CD8-positive, alpha-beta T cell (primary cell): ENCODE measurements at regions of chr19 and their contacts with region 1.

Region 1: GRCh38 chr19:4108767-4109625 is 14.9 kb downstream of the MAP2K2 start:
- DNase-seq: peak; percentile 59 to 96 (median 83)
- ATAC-seq: peak; percentile 55
- H3K4me3 ChIP-seq: peak overlapping the region in 1 of 2 experiments; percentile 22
- H3K4me3 Mint-ChIP-seq: peak overlapping the region; percentile 60
- H3K27ac ChIP-seq: peak overlapping the region; percentile 73 to 74
- H3K27ac Mint-ChIP-seq: peak overlapping the region; percentile 99
- H3K4me1 ChIP-seq: peaks cover 60% of the 10 kb centered on the region
- H3K4me1 Mint-ChIP-seq: peaks cover 68% of the 10 kb centered on the region
- H3K27me3 ChIP-seq: no peaks in the 10 kb centered on the region
- H3K27me3 Mint-ChIP-seq: no peaks in the 10 kb centered on the region
- CTCF ChIP-seq: no peak

Region 2: DNA sequence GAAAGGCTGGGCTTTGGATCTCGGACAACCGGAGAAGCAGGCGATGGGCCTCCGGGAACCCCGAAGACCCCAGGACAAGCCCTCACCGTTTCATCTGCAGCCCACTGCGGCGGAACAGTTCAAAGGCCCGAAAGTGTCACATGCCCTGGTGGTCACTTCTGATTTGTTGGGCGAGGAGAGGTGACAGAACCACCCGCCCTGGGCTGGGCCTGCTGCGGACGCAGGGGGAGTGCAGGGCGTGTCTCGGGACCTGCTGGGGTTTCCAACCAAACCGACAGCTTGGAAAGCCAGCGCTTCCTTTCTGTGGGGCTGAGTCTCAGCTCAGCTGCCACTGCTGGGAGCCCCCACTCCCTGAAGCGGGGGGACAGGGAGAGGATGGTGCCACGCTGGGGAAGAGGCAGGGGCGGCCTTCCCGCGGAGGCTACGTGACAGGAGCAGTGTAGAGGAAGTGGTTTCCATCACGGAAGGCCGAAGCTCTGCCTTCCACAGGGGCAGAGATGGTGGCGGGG is 19.5 kb before region 1 on chr19:
- CTCF ChIA-PET with region 1: interaction called, 4 read pairs
- POLR2A ChIA-PET with region 1: interaction called, 35 read pairs
- intact Hi-C with region 1: loop called (anchors 1 kb)
- DNase-seq: peak in 8 of 9 experiments; percentile 35 to 83 (median 55)
- ATAC-seq: peak; percentile 38
- H3K4me3 ChIP-seq: no peak overlapping the region
- H3K4me3 Mint-ChIP-seq: peak overlapping the region; percentile 66
- H3K27ac ChIP-seq: peak overlapping the region; percentile 41 to 78
- H3K27ac Mint-ChIP-seq: peak overlapping the region; percentile 94
- H3K4me1 ChIP-seq: peaks cover 46% of the 10 kb centered on the region
- H3K4me1 Mint-ChIP-seq: peaks cover 44% of the 10 kb centered on the region
- H3K27me3 ChIP-seq: no peaks in the 10 kb centered on the region
- H3K27me3 Mint-ChIP-seq: no peaks in the 10 kb centered on the region
- CTCF ChIP-seq: no peak

Region 3: GRCh38 chr19:4123615-4124568 is 14.9 kb after region 1 on chr19 and contains the start of gene MAP2K2:
- CTCF ChIA-PET with region 1: interaction called, 4 read pairs
- POLR2A ChIA-PET with region 1: interaction called, 3 read pairs
- intact Hi-C with region 1: loop called (anchors 1 kb)
- DNase-seq: peak; percentile 91 to 98 (median 97)
- ATAC-seq: peak; percentile 96
- H3K4me3 ChIP-seq: peak within 1 kb of the TSS; percentile 57 to 72
- H3K4me3 Mint-ChIP-seq: peak within 1 kb of the TSS; percentile 93
- H3K27ac ChIP-seq: peak within 1 kb of the TSS; percentile 52 to 73
- H3K27ac Mint-ChIP-seq: peak within 1 kb of the TSS; percentile 91
- H3K4me1 ChIP-seq: peaks cover 17% of the 10 kb centered on the region
- H3K4me1 Mint-ChIP-seq: peaks cover 25% of the 10 kb centered on the region
- H3K27me3 ChIP-seq: no peaks in the 10 kb centered on the region
- H3K27me3 Mint-ChIP-seq: no peaks in the 10 kb centered on the region
- CTCF ChIP-seq: no peak
- total RNA-seq, gene MAP2K2: 73.9 to 76.8 TPM

Region 4: GRCh38 chr19:4172861-4173473 is 64.0 kb after region 1 on chr19:
- CTCF ChIA-PET with region 1: no interaction called
- POLR2A ChIA-PET with region 1: no interaction called
- intact Hi-C with region 1: no loop called
- DNase-seq: peak; percentile 46 to 79 (median 67)
- ATAC-seq: peak; percentile 90
- H3K4me3 ChIP-seq: no peak overlapping the region
- H3K4me3 Mint-ChIP-seq: no peak overlapping the region
- H3K27ac ChIP-seq: no peak overlapping the region
- H3K27ac Mint-ChIP-seq: no peak overlapping the region
- H3K4me1 ChIP-seq: no peaks in the 10 kb centered on the region
- H3K4me1 Mint-ChIP-seq: peaks cover 2% of the 10 kb centered on the region
- H3K27me3 ChIP-seq: peaks cover 5% of the 10 kb centered on the region in 2 experiments
- H3K27me3 Mint-ChIP-seq: peaks cover 20% of the 10 kb centered on the region
- CTCF ChIP-seq: no peak

Region 5: DNA sequence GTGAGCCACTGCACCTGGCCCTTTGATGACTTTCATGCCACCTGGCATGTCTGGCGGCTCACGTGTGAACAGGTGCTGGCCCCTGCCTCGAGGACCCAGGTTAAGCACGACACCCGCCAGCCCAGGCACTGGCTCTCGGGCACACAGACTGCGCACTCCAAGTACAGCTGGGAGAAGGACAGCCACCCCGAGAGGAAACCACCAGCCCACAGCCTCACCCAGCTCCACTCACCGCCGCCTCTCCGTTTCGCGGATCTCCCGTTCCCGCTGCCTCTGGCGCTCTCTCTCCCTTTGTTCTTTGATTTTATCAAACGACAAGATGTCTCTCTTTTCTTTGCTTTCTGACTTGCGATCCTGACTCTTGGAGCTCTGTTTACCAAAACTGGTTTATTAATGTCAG is 1486.1 kb after region 1 on chr19:
- CTCF ChIA-PET with region 1: no interaction called
- POLR2A ChIA-PET with region 1: no interaction called
- intact Hi-C with region 1: no loop called
- DNase-seq: no peak
- ATAC-seq: no peak
- H3K4me3 ChIP-seq: no peak overlapping the region
- H3K4me3 Mint-ChIP-seq: no peak overlapping the region
- H3K27ac ChIP-seq: no peak overlapping the region
- H3K27ac Mint-ChIP-seq: no peak overlapping the region
- H3K4me1 ChIP-seq: no peaks in the 10 kb centered on the region
- H3K4me1 Mint-ChIP-seq: peaks cover 10% of the 10 kb centered on the region
- H3K27me3 ChIP-seq: no peaks in the 10 kb centered on the region
- H3K27me3 Mint-ChIP-seq: no peaks in the 10 kb centered on the region
- CTCF ChIP-seq: no peak